Adrenal gland (tissue), 19 donors: ENCODE measurements at regions of chr20 and their contacts with region 1.

Region 1: GRCh38 chr20:36550797-36551299 is 9.5 kb downstream of the MYL9 start:
- DNase-seq: peak; percentile 38 to 85 (median 77)
- H3K4me3 ChIP-seq: no peak overlapping the region
- H3K27ac ChIP-seq: peak overlapping the region; percentile 50 to 82 (median 74)
- H3K4me1 ChIP-seq: peaks cover 0 to 30% of the 10 kb centered on the region in 2 donors
- H3K27me3 ChIP-seq: no peaks in the 10 kb centered on the region
- CTCF ChIP-seq: no peak
- POLR2A ChIP-seq: peak; percentile 18 to 46

Region 2: GRCh38 chr20:36591854-36592641 is 41.2 kb after region 1 on chr20:
- intact Hi-C with region 1: loop called (anchors 5 kb)
- DNase-seq: peak in 4 of 7 donors; percentile 33 to 48 (median 38)
- H3K4me3 ChIP-seq: no peak overlapping the region
- H3K27ac ChIP-seq: no peak overlapping the region
- H3K4me1 ChIP-seq: peaks cover 0 to 9% of the 10 kb centered on the region in 2 donors
- H3K27me3 ChIP-seq: no peaks in the 10 kb centered on the region
- CTCF ChIP-seq: peak in 4 of 6 experiments; percentile 35 to 49 (median 40)
- POLR2A ChIP-seq: no peak

Region 3: GRCh38 chr20:36754656-36755222 is 203.9 kb after region 1 on chr20:
- intact Hi-C with region 1: loop called in 1 of 2 experiments (anchors 10 kb)
- DNase-seq: peak; percentile 50 to 80 (median 63)
- H3K4me3 ChIP-seq: no peak overlapping the region
- H3K27ac ChIP-seq: peak overlapping the region in 1 of 5 donors; percentile 47
- H3K4me1 ChIP-seq: peaks cover 0 to 9% of the 10 kb centered on the region in 2 donors
- H3K27me3 ChIP-seq: no peaks in the 10 kb centered on the region
- CTCF ChIP-seq: peak; percentile 63 to 86 (median 82)
- POLR2A ChIP-seq: no peak